Activated CD4-positive, alpha-beta memory T cell treated with anti-CD3 and anti-CD28 coated beads for 36 hours (primary cell): ENCODE measurements at regions of chr11 and their contacts with region 1.

Region 1: DNA sequence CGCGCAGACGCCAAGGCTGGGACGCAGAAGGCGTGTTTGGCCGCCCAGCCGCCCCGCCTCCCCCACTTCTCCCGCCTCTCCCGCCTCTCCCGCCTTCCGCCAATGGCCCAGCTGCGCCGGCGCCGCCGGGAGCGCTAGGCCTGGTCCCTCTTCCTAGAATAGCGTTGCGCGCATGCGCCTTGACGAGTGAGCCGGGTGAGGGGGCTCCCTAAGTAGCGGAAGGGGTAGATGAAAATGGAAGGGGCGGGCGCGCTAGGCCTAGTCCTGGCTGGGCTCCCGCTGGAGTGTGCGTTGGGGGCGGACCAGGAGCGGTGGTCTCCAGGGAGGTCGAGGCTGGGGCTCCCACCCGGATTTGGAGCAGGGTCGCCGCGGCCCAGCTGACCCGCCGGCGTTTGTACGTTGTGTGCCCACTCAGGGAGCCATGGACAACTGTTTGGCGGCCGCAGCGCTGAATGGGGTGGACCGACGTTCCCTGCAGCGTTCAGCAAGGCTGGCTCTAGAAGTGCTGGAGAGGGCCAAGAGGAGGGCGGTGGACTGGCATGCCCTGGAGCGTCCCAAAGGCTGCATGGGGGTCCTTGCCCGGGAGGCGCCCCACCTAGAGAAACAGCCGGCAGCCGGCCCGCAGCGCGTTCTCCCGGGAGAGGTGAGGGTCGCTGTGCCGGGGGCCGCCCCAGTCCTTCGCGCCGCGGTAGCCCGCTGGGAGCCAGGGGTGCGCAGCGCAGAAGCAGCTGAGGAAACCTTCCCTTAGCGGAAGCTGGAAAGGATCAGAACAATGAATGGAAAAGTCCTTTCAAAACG is at the start of gene AKIP1:
- DNase-seq: peak; percentile 91
- H3K4me3 Mint-ChIP-seq: peak within 1 kb of the TSS; percentile 94
- H3K27ac Mint-ChIP-seq: peak within 1 kb of the TSS; percentile 86
- H3K4me1 Mint-ChIP-seq: peaks cover 45% of the 10 kb centered on the region
- H3K27me3 Mint-ChIP-seq: no peaks in the 10 kb centered on the region
- total RNA-seq, gene AKIP1: 37.9 to 39.9 TPM

Region 2: GRCh38 chr11:8839957-8840945 is 71.0 kb before region 1 on chr11:
- CTCF ChIA-PET with region 1: no interaction called
- POLR2A ChIA-PET with region 1: no interaction called
- intact Hi-C with region 1: loop called (anchors 5 kb)
- DNase-seq: peak; percentile 48
- H3K4me3 Mint-ChIP-seq: no peak overlapping the region
- H3K27ac Mint-ChIP-seq: no peak overlapping the region
- H3K4me1 Mint-ChIP-seq: peaks cover 19% of the 10 kb centered on the region
- H3K27me3 Mint-ChIP-seq: peaks cover 14% of the 10 kb centered on the region

Region 3: DNA sequence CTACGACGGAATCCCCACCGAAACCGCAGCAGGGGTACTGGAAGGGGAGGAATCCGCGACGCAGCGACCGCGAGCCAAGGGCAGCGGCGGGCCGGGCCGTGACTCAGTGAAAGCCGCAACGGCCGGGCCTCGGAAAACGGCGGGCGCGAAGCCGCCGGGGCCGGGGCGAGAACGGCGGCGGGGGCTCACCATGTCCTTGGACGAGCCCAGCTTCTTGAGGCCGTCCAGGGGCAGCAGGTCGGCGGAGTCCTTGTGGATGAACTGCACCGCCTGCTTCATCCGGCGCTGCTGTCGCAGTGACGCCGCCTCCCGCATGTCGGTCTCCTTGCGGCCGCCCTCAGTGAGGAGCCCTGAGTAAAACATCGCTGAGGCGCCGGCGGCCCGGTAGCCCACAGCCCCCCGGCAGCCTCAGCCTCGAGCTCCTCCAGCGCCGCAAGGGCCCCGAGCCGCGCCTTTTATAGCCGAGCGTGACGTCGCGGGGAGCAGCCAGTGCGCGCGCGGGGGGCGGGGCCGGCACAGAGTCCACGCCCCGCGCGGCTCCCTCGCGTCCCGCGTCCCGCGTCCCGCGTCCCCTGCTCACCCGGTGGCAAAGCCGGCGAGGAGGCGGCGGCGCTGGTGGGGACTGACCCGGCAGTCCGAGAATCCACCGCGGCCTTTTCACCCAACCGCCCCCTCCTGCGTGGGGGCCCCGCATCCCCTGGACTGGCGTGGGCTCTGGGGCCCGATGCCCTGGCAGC is 92.5 kb after region 1 on chr11 and contains the start of gene NRIP3:
- CTCF ChIA-PET with region 1: no interaction called
- POLR2A ChIA-PET with region 1: no interaction called
- intact Hi-C with region 1: loop called (anchors 2 kb)
- DNase-seq: peak; percentile 74
- H3K4me3 Mint-ChIP-seq: peak within 1 kb of the TSS; percentile 70
- H3K27ac Mint-ChIP-seq: no peak within 1 kb of the TSS
- H3K4me1 Mint-ChIP-seq: peaks cover 27% of the 10 kb centered on the region
- H3K27me3 Mint-ChIP-seq: peaks cover 36% of the 10 kb centered on the region
- total RNA-seq, gene NRIP3: 2.7 to 2.9 TPM

Region 4: DNA sequence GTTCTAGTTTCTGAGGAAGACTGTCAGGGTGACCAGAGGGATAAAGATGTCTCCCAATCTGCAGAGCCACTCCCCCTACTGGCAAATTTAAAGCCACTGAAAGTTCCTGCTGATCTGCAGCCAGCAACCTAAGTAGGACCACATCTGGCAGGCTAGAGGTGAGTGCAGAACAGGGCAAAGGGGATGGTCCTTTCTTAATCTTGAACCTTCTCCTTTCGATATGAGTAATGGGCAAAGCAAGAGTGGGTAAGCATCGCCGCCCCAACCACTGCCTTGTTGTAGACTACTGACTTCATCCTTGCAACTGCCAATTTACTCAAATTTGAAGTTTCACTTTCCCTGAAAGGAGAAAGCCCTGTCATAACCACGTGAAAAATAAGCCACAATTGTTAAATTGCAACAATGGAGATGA is 149.5 kb after region 1 on chr11:
- CTCF ChIA-PET with region 1: interaction called, 3 read pairs
- POLR2A ChIA-PET with region 1: interaction called, 3 read pairs
- intact Hi-C with region 1: loop called (anchors 5 kb)
- DNase-seq: peak; percentile 88
- H3K4me3 Mint-ChIP-seq: no peak overlapping the region
- H3K27ac Mint-ChIP-seq: no peak overlapping the region
- H3K4me1 Mint-ChIP-seq: peaks cover 12% of the 10 kb centered on the region
- H3K27me3 Mint-ChIP-seq: peaks cover 35% of the 10 kb centered on the region

Region 5: DNA sequence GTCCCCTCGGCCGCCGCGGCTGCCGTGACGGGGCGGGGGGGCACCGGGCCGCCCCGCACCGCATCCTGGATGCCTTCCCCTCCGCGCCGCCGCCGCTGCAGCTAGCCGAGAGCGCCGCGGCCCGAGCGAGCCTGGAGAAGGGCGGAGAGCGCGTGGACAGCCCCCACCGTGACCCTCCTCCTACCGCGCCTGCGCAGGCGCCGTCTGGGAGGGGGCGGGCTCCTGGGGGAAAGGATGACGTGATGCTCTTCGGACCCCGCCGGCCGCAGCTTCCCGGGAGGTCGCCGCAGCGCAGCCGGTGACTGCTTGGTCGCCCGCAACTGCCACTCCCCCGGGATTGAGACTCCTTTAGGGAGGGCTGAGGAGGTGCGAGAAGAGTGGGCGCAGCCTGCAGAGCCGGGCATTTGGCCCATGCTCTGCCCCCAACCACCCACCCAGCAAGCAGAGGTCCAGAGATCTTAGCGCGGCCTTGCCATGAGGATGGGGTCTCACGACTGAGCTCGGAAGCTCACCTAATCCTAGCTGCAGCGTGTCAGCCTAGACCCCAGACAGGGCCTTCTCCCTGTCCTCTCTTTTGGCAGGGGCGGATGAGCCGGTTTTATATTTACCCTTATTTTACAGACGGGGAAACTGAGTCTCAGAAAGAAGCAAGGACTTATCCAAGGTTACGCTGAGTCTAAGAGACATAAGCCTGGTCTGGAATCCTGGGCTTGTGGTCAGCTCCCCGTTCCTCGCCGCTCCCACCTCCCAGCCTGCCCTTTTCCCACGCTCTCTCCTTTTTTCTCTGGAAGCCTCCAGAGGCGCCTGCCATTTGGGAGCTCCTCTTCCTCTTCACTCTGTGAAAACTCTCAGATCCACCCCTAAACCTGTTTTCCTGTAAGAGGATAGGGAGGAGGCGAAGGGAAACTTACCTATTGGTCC is 354.2 kb after region 1 on chr11 and contains the start of gene DENND5A:
- CTCF ChIA-PET with region 1: no interaction called
- POLR2A ChIA-PET with region 1: no interaction called
- intact Hi-C with region 1: loop called (anchors 5 kb)
- DNase-seq: peak; percentile 69
- H3K4me3 Mint-ChIP-seq: peak within 1 kb of the TSS; percentile 89
- H3K27ac Mint-ChIP-seq: peak within 1 kb of the TSS; percentile 96
- H3K4me1 Mint-ChIP-seq: peaks cover 30% of the 10 kb centered on the region
- H3K27me3 Mint-ChIP-seq: peaks cover 8% of the 10 kb centered on the region
- total RNA-seq, gene DENND5A: 41.3 to 41.9 TPM

Region 6: GRCh38 chr11:9565822-9566560 is 654.8 kb after region 1 on chr11:
- CTCF ChIA-PET with region 1: no interaction called
- POLR2A ChIA-PET with region 1: no interaction called
- intact Hi-C with region 1: loop called (anchors 2 kb)
- DNase-seq: peak; percentile 80
- H3K4me3 Mint-ChIP-seq: peak overlapping the region; percentile 36
- H3K27ac Mint-ChIP-seq: peak overlapping the region; percentile 82
- H3K4me1 Mint-ChIP-seq: peaks cover 37% of the 10 kb centered on the region
- H3K27me3 Mint-ChIP-seq: no peaks in the 10 kb centered on the region